ENCODE measurements at regions of chr15 and their contacts with region 1.

Region 1: GRCh38 chr15:93331545-93332167 is 242.6 kb upstream of the RGMA start:
- DNase-seq: peak; percentile 69
- ATAC-seq: peak; percentile 30
- H3K4me3 Mint-ChIP-seq: peak overlapping the region; percentile 63
- H3K27ac Mint-ChIP-seq: no peak overlapping the region
- H3K4me1 Mint-ChIP-seq: peaks cover 71% of the 10 kb centered on the region
- H3K27me3 Mint-ChIP-seq: peaks cover 92% of the 10 kb centered on the region
- CTCF ChIP-seq: no peak

Region 2: DNA sequence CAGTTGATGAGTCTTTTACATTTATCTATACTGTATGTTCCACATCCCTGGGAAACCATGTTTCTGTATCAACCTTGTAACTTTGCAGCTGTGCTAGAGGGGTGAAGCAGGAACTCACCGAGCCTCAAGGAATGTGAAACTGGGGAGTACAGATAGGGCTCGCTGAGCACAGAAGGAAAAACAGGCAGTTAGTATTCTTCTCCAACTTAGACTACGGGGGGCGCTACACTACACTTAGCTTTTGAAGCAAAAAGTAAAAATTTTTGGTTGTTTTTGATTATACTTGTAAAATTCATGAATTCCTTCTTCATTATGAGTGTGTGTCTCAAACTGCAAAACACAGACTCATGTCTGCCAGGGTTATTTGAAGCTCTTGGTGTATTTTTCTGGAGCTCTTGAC is 109.9 kb before region 1 on chr15:
- CTCF ChIA-PET with region 1: interaction called, 12 read pairs
- POLR2A ChIA-PET with region 1: no interaction called
- DNase-seq: no peak
- ATAC-seq: peak; percentile 51
- H3K4me3 Mint-ChIP-seq: no peak overlapping the region
- H3K27ac Mint-ChIP-seq: no peak overlapping the region
- H3K4me1 Mint-ChIP-seq: peaks cover 10% of the 10 kb centered on the region
- H3K27me3 Mint-ChIP-seq: no peaks in the 10 kb centered on the region
- CTCF ChIP-seq: no peak

Region 3: DNA sequence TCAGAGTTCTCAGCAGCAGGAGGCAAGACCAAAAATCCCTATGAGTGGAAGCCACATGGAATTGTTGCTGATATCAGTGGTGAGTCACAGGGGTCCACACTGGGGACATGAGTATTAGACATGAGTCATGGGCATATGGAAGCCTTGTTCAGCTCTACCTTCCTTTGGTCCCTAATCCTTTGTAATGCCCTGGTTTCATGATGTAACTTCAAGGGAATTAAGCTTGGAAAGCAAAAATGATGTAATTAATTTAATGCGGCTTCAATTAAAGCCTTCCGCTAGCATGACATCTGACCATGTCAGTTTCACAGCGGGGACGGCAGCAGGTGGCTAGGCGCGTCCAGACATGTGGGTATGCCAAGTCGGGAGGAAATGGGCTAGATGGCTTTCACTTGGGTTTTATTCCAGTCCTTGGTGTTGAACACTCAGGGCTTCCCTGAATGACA is 66.5 kb before region 1 on chr15:
- CTCF ChIA-PET with region 1: no interaction called
- POLR2A ChIA-PET with region 1: no interaction called
- DNase-seq: no peak
- ATAC-seq: no peak
- H3K4me3 Mint-ChIP-seq: no peak overlapping the region
- H3K27ac Mint-ChIP-seq: no peak overlapping the region
- H3K4me1 Mint-ChIP-seq: peaks cover 7% of the 10 kb centered on the region
- H3K27me3 Mint-ChIP-seq: peaks cover 10% of the 10 kb centered on the region
- CTCF ChIP-seq: no peak

Region 4: DNA sequence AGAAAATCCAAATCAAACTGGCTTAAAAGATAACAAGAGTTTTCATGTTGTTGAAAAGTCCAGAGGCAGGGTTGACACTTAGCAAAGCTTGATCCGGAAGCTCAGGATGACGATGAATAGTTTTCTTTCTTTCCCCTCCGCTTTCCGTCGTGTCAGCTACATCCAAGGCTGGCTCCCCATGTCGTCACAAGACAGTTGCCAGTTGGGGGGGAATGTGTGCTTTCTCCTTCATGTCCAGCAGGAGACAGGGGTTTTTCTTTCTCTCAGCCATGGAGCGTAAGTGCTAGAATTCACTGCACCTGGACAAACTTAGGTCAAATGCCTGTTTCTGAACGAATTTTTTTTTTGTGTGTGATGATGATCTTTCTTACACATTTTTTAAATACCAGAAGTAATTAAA is 31.2 kb after region 1 on chr15:
- CTCF ChIA-PET with region 1: interaction called, 12 read pairs
- POLR2A ChIA-PET with region 1: no interaction called
- DNase-seq: no peak
- ATAC-seq: peak; percentile 47
- H3K4me3 Mint-ChIP-seq: peak overlapping the region; percentile 13; the same call in 1 of the 2 replicates
- H3K27ac Mint-ChIP-seq: no peak overlapping the region
- H3K4me1 Mint-ChIP-seq: peaks cover 57% of the 10 kb centered on the region
- H3K27me3 Mint-ChIP-seq: peaks cover 97% of the 10 kb centered on the region
- CTCF ChIP-seq: no peak

Region 5: DNA sequence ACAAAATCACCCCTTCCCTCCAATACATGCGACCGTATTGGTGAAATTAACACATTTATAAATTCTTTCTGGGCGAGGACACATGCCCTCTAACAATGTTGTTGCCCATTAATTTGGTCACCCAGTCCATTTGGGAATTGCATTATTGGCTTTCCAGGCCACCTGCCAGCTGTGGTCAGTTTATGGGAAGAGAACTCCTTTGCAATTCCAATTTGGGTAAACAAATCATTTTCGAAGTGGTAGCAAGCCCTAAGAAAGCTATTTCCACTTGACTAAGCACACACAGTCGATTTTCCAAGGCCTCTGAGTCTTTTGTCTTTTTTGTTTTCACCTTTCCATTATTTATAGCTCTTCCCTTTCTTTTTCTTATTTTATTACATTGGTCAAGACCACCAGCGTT is 119.6 kb after region 1 on chr15:
- CTCF ChIA-PET with region 1: no interaction called
- POLR2A ChIA-PET with region 1: no interaction called
- DNase-seq: no peak
- ATAC-seq: peak; percentile 40
- H3K4me3 Mint-ChIP-seq: no peak overlapping the region
- H3K27ac Mint-ChIP-seq: peak overlapping the region; percentile 82
- H3K4me1 Mint-ChIP-seq: peaks cover 53% of the 10 kb centered on the region
- H3K27me3 Mint-ChIP-seq: peaks cover 12% of the 10 kb centered on the region
- CTCF ChIP-seq: no peak

Region 6: DNA sequence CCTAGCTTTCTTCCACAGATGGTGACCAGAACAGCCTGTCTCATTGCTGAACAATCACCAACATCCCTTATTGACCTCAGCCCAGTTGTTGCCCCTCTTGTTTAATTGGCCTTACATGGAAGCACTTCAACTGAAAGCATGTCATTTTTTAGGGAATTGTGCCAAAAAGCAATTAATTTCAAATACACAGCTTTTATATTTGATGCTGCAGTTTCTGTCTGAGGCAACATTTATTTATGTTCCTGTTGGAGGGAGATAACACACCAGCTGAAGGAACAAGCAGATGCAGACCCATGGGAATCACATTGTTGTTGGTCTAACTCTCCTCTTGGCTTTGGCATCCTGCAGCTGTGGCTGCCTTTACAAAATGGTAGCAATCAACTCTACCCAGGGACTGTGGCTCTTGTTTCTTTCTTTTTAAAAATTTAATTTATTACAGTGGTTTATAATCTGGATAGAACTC is 255.4 kb after region 1 on chr15:
- CTCF ChIA-PET with region 1: no interaction called
- POLR2A ChIA-PET with region 1: no interaction called
- DNase-seq: no peak
- ATAC-seq: no peak
- H3K4me3 Mint-ChIP-seq: no peak overlapping the region
- H3K27ac Mint-ChIP-seq: no peak overlapping the region
- H3K4me1 Mint-ChIP-seq: no peaks in the 10 kb centered on the region
- H3K27me3 Mint-ChIP-seq: no peaks in the 10 kb centered on the region
- CTCF ChIP-seq: no peak

Measured in WTC11 (cell line).